PC-3 (cell line): ENCODE measurements at regions of chr3 and their contacts with region 1.

Region 1: GRCh38 chr3:42061713-42062408 is 29.3 kb upstream of the TRAK1 start:
- DNase-seq: peak; percentile 98
- ATAC-seq: peak; percentile 97
- H3K4me3 ChIP-seq: peak overlapping the region; percentile 23; the same call in 1 of the 2 replicates
- H3K27ac ChIP-seq: peak overlapping the region; percentile 73
- H3K4me1 ChIP-seq: peaks cover 22% of the 10 kb centered on the region
- H3K27me3 ChIP-seq: no peaks in the 10 kb centered on the region
- CTCF ChIP-seq: no peak

Region 2: GRCh38 chr3:41961750-41962679 is 99.8 kb before region 1 on chr3 and contains the start of gene ULK4:
- CTCF ChIA-PET with region 1: no interaction called
- POLR2A ChIA-PET with region 1: no interaction called
- intact Hi-C with region 1: no loop called
- DNase-seq: peak; percentile 99
- ATAC-seq: peak; percentile 90
- H3K4me3 ChIP-seq: peak within 1 kb of the TSS; percentile 87
- H3K27ac ChIP-seq: peak within 1 kb of the TSS; percentile 15
- H3K4me1 ChIP-seq: peaks cover 6% of the 10 kb centered on the region; the same call in 1 of the 2 replicates
- H3K27me3 ChIP-seq: no peaks in the 10 kb centered on the region
- CTCF ChIP-seq: no peak
- total RNA-seq, gene ULK4: 4.8 and 10.0 TPM in 2 replicates

Region 3: GRCh38 chr3:42012935-42013690 is 48.7 kb before region 1 on chr3:
- CTCF ChIA-PET with region 1: no interaction called
- POLR2A ChIA-PET with region 1: no interaction called
- intact Hi-C with region 1: loop called (anchors 1 kb)
- DNase-seq: peak; percentile 55
- ATAC-seq: peak; percentile 83
- H3K4me3 ChIP-seq: peak overlapping the region; percentile 77
- H3K27ac ChIP-seq: no peak overlapping the region
- H3K4me1 ChIP-seq: peaks cover 15% of the 10 kb centered on the region
- H3K27me3 ChIP-seq: no peaks in the 10 kb centered on the region
- CTCF ChIP-seq: no peak

Region 4: GRCh38 chr3:42090973-42091731 is 29.3 kb after region 1 on chr3 and contains the start of gene TRAK1:
- CTCF ChIA-PET with region 1: no interaction called
- POLR2A ChIA-PET with region 1: no interaction called
- intact Hi-C with region 1: no loop called
- DNase-seq: no peak
- ATAC-seq: no peak
- H3K4me3 ChIP-seq: no peak within 1 kb of the TSS
- H3K27ac ChIP-seq: no peak within 1 kb of the TSS
- H3K4me1 ChIP-seq: no peaks in the 10 kb centered on the region
- H3K27me3 ChIP-seq: no peaks in the 10 kb centered on the region
- CTCF ChIP-seq: no peak
- total RNA-seq, gene TRAK1: 23.4 and 29.0 TPM in 2 replicates